GM12878 (cell line): ENCODE measurements at regions of chr11 and their contacts with region 1.

Region 1: GRCh38 chr11:83956110-83956697 is 670.0 kb upstream of the CCDC90B start:
- DNase-seq: no peak
- ATAC-seq: peak; percentile 69
- H3K4me3 ChIP-seq: no peak overlapping the region
- H3K27ac ChIP-seq: no peak overlapping the region
- H3K4me1 ChIP-seq: no peaks in the 10 kb centered on the region
- H3K27me3 ChIP-seq: no peaks in the 10 kb centered on the region
- CTCF ChIP-seq: peak; percentile 8 to 44 (median 13); a peak in 3 of 6 replicates
- EP300 ChIP-seq: no peak
- POLR2A ChIP-seq: no peak
- RAD21 ChIP-seq: no peak

Region 2: GRCh38 chr11:84261707-84262106 is 305.5 kb after region 1 on chr11:
- CTCF ChIA-PET with region 1: no interaction called
- POLR2A ChIA-PET with region 1: no interaction called
- RAD21 ChIA-PET with region 1: no interaction called
- SMC1A ChIA-PET with region 1: no interaction called
- in situ Hi-C with region 1: no loop called
- intact Hi-C with region 1: loop called (anchors 1 kb)
- DNase-seq: no peak
- ATAC-seq: peak; percentile 78
- H3K4me3 ChIP-seq: no peak overlapping the region
- H3K27ac ChIP-seq: no peak overlapping the region
- H3K4me1 ChIP-seq: no peaks in the 10 kb centered on the region
- H3K27me3 ChIP-seq: no peaks in the 10 kb centered on the region; a peak in 1 of 4 replicates
- CTCF ChIP-seq: peak in 2 of 3 experiments; percentile 29 to 40; a peak in 4 of 6 replicates
- EP300 ChIP-seq: 0 out of 4 replicates have a peak, but pooled peaks of 1 of the 2 experiments have one; percentile 9
- POLR2A ChIP-seq: no peak
- RAD21 ChIP-seq: peak; percentile 66